ENCODE measurements at regions of chr2 and their contacts with region 1.

Region 1: GRCh38 chr2:212147921-212148513 is 390.6 kb downstream of the ERBB4 start:
- DNase-seq: peak; percentile 1
- ATAC-seq: no peak
- H3K4me3 ChIP-seq: no peak overlapping the region
- H3K27ac ChIP-seq: no peak overlapping the region
- H3K4me1 ChIP-seq: no peaks in the 10 kb centered on the region
- H3K27me3 ChIP-seq: no peaks in the 10 kb centered on the region
- CTCF ChIP-seq: peak; percentile 44
- POLR2A ChIP-seq: no peak
- RAD21 ChIP-seq: 0 out of 2 replicates have a peak, but pooled peaks have one; percentile 18

Region 2: GRCh38 chr2:211745295-211746097 is 402.5 kb before region 1 on chr2:
- CTCF ChIA-PET with region 1: no interaction called
- POLR2A ChIA-PET with region 1: no interaction called
- dilution Hi-C with region 1: no loop called
- in situ Hi-C with region 1: no loop called
- intact Hi-C with region 1: loop called (anchors 10 kb)
- DNase-seq: peak; percentile 49
- ATAC-seq: peak; percentile 85
- H3K4me3 ChIP-seq: no peak overlapping the region
- H3K27ac ChIP-seq: no peak overlapping the region
- H3K4me1 ChIP-seq: no peaks in the 10 kb centered on the region
- H3K27me3 ChIP-seq: no peaks in the 10 kb centered on the region
- CTCF ChIP-seq: peak; percentile 90
- POLR2A ChIP-seq: no peak
- RAD21 ChIP-seq: peak; percentile 93

Region 3: DNA sequence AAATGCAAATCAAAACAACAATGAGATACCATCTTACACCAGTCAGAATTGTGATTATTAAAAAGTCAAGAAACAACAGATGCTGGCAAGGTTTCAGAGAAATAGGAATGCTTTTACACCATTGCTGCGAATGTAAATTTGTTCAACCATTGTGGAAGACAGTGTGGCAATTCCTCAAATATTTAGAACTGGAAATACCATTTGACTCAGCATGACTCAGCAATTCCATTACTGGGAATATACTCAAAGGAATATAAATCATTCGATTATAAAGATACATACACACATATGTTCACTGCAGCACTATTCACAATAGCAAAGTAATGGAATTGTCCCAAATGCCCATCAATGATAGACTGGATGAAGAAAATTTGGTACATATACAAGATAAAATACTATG is 126.1 kb before region 1 on chr2:
- CTCF ChIA-PET with region 1: no interaction called
- POLR2A ChIA-PET with region 1: no interaction called
- dilution Hi-C with region 1: no loop called
- in situ Hi-C with region 1: no loop called
- intact Hi-C with region 1: no loop called
- DNase-seq: peak; percentile 88
- ATAC-seq: peak; percentile 69
- H3K4me3 ChIP-seq: no peak overlapping the region
- H3K27ac ChIP-seq: peak overlapping the region; percentile 72
- H3K4me1 ChIP-seq: no peaks in the 10 kb centered on the region
- H3K27me3 ChIP-seq: no peaks in the 10 kb centered on the region
- CTCF ChIP-seq: no peak
- POLR2A ChIP-seq: no peak
- RAD21 ChIP-seq: no peak